GM10248 (cell line): ENCODE measurements at regions of chr2 and their contacts with region 1.

Region 1: GRCh38 chr2:20642055-20642971 is 8.6 kb downstream of the HS1BP3 start:
- DNase-seq: peak; percentile 91
- CTCF ChIP-seq: peak; percentile 84

Region 2: GRCh38 chr2:20326163-20326780 is 316.0 kb before region 1 on chr2:
- CTCF ChIA-PET with region 1: interaction called, 11 read pairs
- POLR2A ChIA-PET with region 1: no interaction called
- DNase-seq: peak; percentile 51
- CTCF ChIP-seq: peak; percentile 59

Region 3: GRCh38 chr2:20398956-20399567 is 243.3 kb before region 1 on chr2:
- CTCF ChIA-PET with region 1: interaction called, 16 read pairs
- POLR2A ChIA-PET with region 1: no interaction called
- DNase-seq: no peak
- CTCF ChIP-seq: no peak

Region 4: DNA sequence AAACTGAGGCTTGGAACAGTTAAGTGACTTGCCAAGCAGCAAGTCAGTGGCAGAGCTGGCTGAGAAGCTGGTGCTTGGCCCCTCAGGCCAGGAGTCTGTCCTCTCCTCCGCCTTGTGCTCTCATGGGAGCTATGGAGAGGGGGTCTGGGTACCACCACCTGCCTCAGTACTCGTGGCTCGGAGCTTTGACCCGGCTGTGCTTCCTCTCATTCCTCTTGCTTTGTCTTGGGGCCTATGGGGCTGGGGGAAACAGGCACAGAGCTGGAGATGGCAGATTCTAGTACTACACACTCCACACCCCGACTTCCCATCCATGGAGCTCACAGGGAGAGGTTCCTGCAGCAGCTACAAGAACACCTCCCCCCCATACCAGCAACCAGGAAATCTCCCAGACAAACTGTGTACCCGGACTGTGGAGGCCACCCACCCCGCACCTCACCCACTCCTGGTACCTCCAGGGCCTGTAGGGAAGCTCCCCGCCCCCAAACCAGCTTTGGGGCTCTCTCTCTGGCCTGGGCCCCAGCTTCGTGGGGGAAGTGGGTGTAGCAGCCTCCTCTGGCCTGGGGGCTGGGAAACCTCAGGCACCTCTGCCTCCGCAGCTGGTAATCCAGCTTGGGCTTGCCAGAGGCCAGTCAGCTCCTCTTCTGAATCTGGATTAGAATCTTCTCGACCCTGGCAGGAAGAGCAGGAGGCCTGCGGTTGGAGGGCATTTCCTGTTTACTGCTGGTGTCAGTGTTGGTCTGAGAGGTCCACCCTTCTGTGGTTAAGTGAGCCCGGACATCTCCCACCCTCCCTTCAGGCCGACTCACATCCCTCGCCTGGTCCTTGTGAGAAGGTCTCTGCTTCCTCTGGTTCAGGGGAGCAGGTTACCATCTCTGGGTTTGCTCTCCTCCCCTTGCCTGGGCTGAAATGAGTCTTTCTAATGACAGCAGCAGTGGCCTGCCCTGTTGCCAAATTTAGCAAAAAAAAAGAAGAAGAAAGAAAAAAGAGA is 217.7 kb before region 1 on chr2:
- CTCF ChIA-PET with region 1: interaction called, 62 read pairs
- POLR2A ChIA-PET with region 1: no interaction called
- DNase-seq: peak; percentile 64
- CTCF ChIP-seq: no peak

Region 5: DNA sequence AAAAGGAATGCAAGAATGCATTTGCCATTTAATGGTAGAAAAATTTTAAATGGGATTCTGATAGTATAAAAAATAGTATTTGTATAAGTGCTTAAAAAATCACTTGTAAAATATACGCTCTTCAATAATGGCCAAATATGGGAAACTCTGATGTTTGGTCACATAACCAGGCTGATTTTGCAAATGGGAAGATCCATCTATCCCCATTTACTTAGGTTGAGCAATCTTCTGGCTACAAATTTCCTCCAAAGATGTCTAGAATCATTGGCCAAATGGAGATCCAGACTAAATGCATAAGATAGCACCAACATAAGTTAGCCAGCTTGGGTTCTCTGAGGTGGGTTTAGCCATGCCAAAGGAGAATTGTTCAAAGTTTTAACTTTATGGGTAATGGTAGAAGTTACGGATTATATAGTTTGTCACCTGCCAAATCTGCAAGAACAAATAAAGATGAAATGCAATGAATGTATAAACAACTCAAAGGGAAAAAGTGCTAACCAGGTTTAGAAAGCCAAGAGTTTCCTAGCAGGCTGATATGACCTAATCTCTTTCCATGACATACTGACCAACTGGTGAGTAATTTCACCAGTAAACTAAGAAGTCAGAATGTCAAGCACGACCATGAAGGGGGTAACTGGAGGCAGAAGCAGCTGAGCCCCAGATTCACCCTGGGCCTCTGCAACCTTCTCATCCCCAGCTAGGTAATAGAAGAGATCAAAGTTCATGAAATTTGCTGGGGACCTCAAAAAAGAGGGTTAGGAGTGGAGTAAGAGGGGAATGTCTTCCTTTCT is 185.5 kb before region 1 on chr2:
- CTCF ChIA-PET with region 1: interaction called, 25 read pairs
- POLR2A ChIA-PET with region 1: no interaction called
- DNase-seq: peak; percentile 36
- CTCF ChIP-seq: no peak

Region 6: DNA sequence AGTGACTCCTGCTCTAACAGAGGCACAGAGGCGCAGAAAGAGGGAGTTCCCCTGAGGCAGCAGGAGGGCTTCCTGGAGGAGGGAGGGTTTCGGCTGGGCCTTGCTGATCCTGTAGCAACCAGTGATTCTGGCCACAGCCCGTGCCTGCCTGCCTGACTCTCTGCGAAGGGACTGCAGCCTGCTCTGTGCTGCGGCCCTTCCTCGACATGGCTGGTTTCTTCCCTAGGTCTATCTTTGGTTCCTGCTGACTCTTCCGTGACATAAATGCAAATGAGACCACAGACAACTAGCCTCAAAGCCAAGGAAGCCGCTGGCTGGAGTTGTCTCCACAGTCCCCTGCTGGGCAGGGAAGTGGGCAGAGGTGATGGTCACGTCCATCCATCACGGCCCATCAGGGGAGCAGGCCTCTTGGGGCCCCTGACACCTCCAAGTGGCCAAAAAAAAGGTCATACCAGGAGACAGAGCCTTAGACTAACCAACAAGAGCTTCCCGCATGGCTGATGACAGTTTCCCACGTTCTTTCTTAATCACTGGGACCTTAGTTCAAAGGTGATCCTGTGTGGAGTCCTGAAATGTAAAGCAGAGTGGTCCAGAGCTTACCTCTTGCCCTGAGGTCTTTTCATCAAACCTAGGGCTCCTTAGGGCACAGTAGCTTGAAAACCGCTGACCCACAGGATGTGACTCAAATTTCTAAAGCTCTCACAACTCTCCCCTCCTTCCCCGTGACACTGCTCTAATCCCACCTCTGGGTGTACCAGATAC is 46.7 kb before region 1 on chr2:
- CTCF ChIA-PET with region 1: interaction called, 19 read pairs
- POLR2A ChIA-PET with region 1: no interaction called
- DNase-seq: peak; percentile 77
- CTCF ChIP-seq: no peak

Region 7: DNA sequence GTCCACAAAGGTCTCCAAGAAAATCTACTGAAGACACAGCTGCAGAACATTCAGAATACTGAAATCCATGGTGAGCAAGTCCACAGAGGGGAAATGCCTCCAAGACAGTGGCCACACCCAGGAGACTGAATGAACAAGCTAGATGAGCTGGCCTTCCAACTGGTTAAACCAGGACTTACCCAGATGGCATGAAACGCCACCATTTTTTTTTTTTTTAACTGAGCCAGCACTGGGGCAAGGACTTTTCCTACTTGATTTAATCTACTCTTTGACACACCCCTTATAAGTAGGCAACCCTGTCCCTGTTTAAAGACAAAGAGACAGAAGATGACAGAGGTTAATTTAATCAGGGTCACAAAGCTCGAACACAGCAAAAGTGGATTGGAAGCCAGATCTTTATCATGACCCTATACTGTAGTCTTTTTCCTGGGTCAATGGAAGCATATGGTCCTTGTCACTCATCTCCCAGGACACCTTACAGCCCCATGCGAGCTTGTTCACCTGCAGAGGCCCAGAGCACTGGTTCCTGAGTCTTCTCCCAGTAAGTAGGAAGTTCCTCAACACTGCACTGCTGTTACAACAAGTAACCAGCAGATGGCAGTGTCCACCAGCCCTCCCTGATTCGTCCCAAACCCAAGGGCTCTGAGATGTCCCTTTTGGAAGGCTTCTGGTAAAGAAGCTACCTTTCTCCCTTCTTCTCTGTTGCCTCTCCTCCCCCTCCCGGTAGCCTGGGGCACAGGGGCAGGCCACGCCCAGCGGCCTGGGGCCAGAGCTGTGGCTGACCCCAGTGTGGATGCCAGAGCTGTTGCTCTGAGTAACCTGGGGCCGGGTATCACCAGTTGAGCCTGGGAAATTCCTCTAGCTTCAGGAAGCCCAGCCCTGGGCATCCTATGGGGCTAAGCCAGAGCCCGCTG is 19.0 kb after region 1 on chr2:
- CTCF ChIA-PET with region 1: interaction called, 91 read pairs
- POLR2A ChIA-PET with region 1: no interaction called
- DNase-seq: peak; percentile 80
- CTCF ChIP-seq: peak; percentile 94

Region 8: GRCh38 chr2:20803226-20803682 is 160.9 kb after region 1 on chr2:
- CTCF ChIA-PET with region 1: no interaction called
- POLR2A ChIA-PET with region 1: no interaction called
- DNase-seq: no peak
- CTCF ChIP-seq: no peak